Activated CD4-positive, alpha-beta T cell treated with anti-CD3 and anti-CD28 coated beads, Interleukin-2, amount 10 ng/mL, durations not matched to agents 7 days and 5 days (primary cell): ENCODE measurements at regions of chr10 and their contacts with region 1.

Region 1: DNA sequence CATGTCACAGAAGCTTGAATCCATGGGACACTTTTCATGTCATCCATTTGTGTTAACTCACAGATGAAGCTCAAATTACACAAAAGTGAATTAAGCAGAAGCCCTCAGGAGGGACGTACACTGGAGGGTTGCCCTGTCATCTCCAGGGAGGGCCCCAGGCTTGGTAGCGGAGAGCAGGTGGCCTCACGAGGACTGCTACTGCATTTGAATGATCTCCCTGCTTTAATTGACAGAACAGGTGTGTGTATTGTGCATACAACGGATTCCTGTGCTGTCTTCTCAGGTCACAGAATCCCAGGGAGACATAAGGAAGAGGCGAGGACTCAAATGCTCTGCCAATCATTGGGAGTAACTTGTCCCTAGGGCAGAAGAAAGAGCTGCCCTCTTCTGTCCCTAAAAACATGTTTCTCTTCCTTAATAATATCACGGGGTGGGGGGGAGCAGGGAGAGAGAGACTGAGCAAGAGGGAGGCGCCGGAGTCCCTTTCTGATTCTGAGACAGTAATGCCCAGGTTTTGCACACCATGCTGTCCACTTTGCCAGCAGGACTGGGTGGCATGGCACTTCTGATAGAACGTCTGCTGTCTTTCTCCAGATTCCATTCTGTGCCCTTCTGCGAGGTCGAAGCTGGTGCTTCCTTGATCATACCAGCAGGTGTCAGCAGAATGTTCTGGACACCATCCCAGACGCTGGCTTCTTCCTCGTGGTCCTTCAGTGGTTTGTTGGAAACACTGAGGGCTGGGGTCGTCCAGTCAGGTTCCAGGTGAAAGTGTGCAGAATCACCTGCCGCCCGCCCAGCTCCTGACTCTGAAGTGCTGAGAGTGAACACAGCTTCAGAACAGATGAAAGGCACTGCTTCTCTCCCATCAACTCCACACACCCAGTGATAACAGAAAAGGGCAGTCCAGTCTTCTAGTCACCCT is 26.2 kb upstream of the RASGEF1A start:
- DNase-seq: peak; percentile 54
- H3K4me3 Mint-ChIP-seq: no peak overlapping the region
- H3K27ac Mint-ChIP-seq: peak overlapping the region; percentile 90
- H3K4me1 Mint-ChIP-seq: peaks cover 82% of the 10 kb centered on the region
- H3K27me3 Mint-ChIP-seq: peaks cover 8% of the 10 kb centered on the region

Region 2: DNA sequence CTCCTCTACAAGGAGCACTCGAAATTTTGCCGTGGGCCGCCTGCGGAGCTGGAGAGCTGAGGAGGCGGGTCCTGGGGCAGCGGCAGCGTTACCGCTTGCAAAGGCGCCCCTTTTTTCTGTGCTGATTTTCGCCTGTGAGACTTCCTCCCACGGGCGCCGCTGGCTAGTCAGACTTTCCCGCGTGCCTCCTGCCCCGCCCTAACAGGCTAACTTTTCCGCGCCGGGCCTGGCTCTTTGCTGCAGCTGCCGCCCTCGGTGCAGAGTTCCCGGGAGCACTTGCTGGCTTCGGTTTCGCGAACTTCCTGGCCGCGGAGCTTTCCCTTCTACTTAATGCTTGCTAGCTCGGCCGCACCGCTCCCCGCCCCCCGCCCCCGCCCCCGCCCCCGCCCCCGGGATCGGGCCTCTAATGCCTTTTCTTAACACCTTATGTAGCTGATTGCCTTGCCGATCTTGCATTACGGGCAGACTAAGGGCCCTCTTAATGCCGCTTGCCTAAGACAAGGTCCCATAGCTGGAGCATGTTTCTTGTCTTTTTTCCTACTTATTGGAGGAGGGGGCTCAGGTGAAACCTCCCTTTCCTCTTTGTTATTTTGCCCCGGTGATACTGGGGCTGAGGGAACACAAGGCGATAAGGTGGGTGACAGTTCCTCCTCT is 11.8 kb after region 1 on chr10:
- CTCF ChIA-PET with region 1: interaction called, 18 read pairs
- POLR2A ChIA-PET with region 1: no interaction called
- DNase-seq: peak; percentile 51
- H3K4me3 Mint-ChIP-seq: peak overlapping the region; percentile 58
- H3K27ac Mint-ChIP-seq: peak overlapping the region; percentile 68
- H3K4me1 Mint-ChIP-seq: peaks cover 61% of the 10 kb centered on the region
- H3K27me3 Mint-ChIP-seq: peaks cover 29% of the 10 kb centered on the region

Region 3: GRCh38 chr10:43348511-43349312 is 55.7 kb after region 1 on chr10:
- CTCF ChIA-PET with region 1: interaction called, 37 read pairs
- POLR2A ChIA-PET with region 1: no interaction called
- DNase-seq: peak; percentile 92
- H3K4me3 Mint-ChIP-seq: no peak overlapping the region
- H3K27ac Mint-ChIP-seq: peak overlapping the region; percentile 81
- H3K4me1 Mint-ChIP-seq: peaks cover 50% of the 10 kb centered on the region
- H3K27me3 Mint-ChIP-seq: peaks cover 20% of the 10 kb centered on the region

Region 4: GRCh38 chr10:43386981-43387677 is 94.1 kb after region 1 on chr10:
- CTCF ChIA-PET with region 1: no interaction called
- POLR2A ChIA-PET with region 1: no interaction called
- DNase-seq: no peak
- H3K4me3 Mint-ChIP-seq: no peak overlapping the region
- H3K27ac Mint-ChIP-seq: peak overlapping the region; percentile 51
- H3K4me1 Mint-ChIP-seq: peaks cover 59% of the 10 kb centered on the region
- H3K27me3 Mint-ChIP-seq: no peaks in the 10 kb centered on the region

Region 5: DNA sequence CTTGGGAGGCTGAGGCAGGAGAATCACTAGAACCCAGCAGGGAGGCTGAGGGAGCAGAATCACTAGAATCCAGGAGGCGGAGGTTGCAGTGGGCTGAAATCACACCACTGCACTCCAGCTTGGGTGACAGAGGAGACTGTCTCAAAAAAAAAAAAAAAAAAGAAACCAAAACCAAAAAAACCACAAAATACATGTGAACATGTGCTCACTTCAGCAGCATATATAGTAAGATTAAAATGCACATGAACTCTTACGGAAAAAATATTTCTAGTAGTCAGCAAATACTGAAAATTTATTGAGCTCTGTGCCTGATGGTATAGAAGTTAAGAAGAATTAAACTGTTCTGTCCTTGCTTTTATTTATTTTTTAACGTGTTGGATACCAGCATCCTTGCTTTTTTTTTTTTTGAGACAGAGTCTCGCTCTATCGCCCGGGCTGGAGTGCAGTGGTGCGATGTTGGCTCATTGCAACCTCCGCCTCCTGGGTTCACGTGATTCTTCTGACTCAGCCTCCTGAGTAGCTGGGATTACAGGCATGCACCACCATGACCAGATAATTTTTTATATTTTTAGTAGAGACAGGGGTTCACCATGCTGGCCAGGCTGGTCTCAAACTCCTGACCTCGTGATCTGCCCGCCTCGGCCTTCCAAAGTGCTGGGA is 134.3 kb after region 1 on chr10:
- CTCF ChIA-PET with region 1: no interaction called
- POLR2A ChIA-PET with region 1: no interaction called
- DNase-seq: peak; percentile 57
- H3K4me3 Mint-ChIP-seq: peak overlapping the region; percentile 62
- H3K27ac Mint-ChIP-seq: peak overlapping the region; percentile 92
- H3K4me1 Mint-ChIP-seq: peaks cover 37% of the 10 kb centered on the region
- H3K27me3 Mint-ChIP-seq: no peaks in the 10 kb centered on the region

Region 6: DNA sequence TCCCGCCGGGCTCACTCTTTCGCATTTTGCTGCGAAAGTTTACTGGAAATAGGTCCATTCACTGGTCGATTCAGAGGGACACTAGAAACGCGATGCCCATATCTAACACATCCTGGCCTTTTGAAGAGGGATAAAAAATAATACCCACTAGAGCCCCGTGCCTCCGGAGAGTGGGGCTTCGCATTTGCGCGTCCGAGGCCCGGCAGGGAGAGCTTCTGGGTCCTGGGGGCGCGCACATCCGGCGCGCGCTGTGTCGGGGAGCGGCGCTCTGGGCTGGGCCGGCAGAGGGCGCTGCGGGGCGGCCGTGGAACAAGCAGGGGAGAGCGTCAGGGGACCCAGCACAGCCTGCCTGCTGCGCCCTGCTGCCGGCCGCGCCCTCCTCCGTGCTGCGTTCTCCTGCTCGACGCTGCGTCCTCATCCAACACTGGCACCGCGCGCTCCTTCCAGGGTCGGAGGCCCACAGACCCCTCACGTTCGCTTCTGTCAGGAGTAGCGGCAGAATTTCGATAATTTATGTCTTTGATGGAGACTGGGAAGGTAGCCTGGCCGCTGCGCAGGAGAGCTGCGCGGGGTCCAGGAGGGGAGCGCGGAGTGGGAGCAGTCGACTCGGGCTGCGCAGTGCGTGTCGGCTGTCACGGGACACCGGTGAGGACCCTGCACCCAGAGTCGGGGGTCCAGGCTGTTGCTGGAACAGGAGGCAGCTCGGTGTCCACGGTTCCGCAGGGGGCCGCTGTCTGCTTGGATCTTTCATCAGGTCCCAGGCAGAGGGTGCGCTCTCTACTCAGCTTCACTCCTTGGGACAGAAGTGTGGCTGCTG is 397.1 kb after region 1 on chr10:
- CTCF ChIA-PET with region 1: no interaction called
- POLR2A ChIA-PET with region 1: no interaction called
- DNase-seq: peak; percentile 82
- H3K4me3 Mint-ChIP-seq: peak overlapping the region; percentile 74
- H3K27ac Mint-ChIP-seq: peak overlapping the region; percentile 74
- H3K4me1 Mint-ChIP-seq: peaks cover 7% of the 10 kb centered on the region
- H3K27me3 Mint-ChIP-seq: peaks cover 27% of the 10 kb centered on the region